ENCODE measurements at regions of chr9 and their contacts with region 1.

Region 1: DNA sequence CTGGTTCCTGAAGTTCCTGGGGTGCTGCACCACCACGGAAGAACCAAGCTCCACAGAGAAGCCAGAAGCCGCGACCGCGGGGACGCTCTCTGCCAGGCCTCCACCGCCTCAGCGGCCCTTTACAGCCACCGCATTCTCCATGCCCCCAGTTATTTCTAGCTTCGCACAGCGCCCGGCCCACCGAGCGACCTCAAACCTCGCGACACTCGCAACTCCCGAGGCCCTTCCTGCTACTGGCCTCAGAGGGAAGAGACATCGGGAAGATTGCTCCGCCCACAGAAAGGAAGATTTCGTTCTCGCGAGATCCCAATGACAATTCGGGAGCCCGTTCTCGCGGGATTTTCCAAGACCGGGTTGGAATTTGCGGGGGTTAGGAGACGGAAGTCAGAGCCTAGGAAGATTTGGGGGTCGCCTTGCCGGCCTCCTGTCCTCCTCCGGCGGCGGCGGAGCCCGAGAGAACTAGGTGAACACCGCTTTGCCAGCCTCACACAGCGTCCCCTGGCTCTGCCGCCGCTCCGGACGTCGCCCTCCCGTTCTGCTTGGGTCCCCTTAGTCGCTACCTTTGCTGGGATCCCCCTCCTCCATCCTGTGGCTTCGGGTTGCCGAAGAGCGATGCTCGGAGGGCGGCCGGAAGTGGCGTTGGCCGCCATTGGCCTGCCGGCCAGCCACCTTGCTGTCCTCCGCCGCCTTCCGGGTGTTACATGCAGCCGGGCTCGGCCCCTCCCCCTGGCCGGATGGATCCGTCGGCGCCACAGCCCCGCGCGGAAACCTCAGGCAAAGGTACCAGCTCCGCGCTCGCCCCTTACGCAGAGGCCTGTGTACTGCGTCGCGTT is at the start of gene ERCC6L2:
- DNase-seq: peak; percentile 94
- H3K4me3 Mint-ChIP-seq: no peak within 1 kb of the TSS
- H3K27ac Mint-ChIP-seq: no peak within 1 kb of the TSS
- H3K4me1 Mint-ChIP-seq: peaks cover 21% of the 10 kb centered on the region
- H3K27me3 Mint-ChIP-seq: no peaks in the 10 kb centered on the region
- total RNA-seq, gene ERCC6L2: 27.7 to 28.5 TPM

Region 2: DNA sequence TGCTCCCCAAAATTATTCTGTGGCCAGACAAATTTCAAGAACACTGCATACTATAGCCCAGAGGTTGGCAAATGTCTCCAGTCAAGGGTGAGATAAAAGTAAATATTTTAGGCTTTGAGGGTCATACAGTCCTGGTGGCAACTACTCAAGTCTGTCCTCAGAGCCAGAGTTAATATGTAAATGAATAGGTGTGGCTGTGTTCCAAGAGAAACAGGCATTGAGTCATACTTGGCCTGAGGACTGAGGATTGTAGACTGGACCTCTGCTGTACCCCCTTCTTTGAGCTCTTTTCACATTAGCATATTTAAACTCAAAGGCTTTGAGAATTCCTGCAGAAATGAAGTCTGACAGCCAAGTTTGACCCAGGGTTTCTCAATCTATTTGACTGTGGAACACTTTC is 229.5 kb before region 1 on chr9:
- CTCF ChIA-PET with region 1: no interaction called
- POLR2A ChIA-PET with region 1: no interaction called
- DNase-seq: no peak
- H3K4me3 Mint-ChIP-seq: no peak overlapping the region
- H3K27ac Mint-ChIP-seq: no peak overlapping the region
- H3K4me1 Mint-ChIP-seq: no peaks in the 10 kb centered on the region
- H3K27me3 Mint-ChIP-seq: peaks cover 2% of the 10 kb centered on the region

Region 3: GRCh38 chr9:95696701-95697100 is 178.8 kb before region 1 on chr9:
- CTCF ChIA-PET with region 1: no interaction called
- POLR2A ChIA-PET with region 1: no interaction called
- DNase-seq: no peak
- H3K4me3 Mint-ChIP-seq: no peak overlapping the region
- H3K27ac Mint-ChIP-seq: no peak overlapping the region
- H3K4me1 Mint-ChIP-seq: no peaks in the 10 kb centered on the region
- H3K27me3 Mint-ChIP-seq: peaks cover 1% of the 10 kb centered on the region

Region 4: GRCh38 chr9:95793924-95794828 is 81.3 kb before region 1 on chr9:
- CTCF ChIA-PET with region 1: no interaction called
- POLR2A ChIA-PET with region 1: no interaction called
- DNase-seq: no peak
- H3K4me3 Mint-ChIP-seq: no peak overlapping the region
- H3K27ac Mint-ChIP-seq: no peak overlapping the region
- H3K4me1 Mint-ChIP-seq: no peaks in the 10 kb centered on the region
- H3K27me3 Mint-ChIP-seq: peaks cover 30% of the 10 kb centered on the region

Region 5: GRCh38 chr9:95852059-95853032 is 23.2 kb before region 1 on chr9:
- CTCF ChIA-PET with region 1: interaction called, 5 read pairs
- POLR2A ChIA-PET with region 1: interaction called, 46 read pairs
- DNase-seq: no peak
- H3K4me3 Mint-ChIP-seq: peak overlapping the region; percentile 32
- H3K27ac Mint-ChIP-seq: peak overlapping the region; percentile 29
- H3K4me1 Mint-ChIP-seq: peaks cover 35% of the 10 kb centered on the region
- H3K27me3 Mint-ChIP-seq: no peaks in the 10 kb centered on the region

Region 6: DNA sequence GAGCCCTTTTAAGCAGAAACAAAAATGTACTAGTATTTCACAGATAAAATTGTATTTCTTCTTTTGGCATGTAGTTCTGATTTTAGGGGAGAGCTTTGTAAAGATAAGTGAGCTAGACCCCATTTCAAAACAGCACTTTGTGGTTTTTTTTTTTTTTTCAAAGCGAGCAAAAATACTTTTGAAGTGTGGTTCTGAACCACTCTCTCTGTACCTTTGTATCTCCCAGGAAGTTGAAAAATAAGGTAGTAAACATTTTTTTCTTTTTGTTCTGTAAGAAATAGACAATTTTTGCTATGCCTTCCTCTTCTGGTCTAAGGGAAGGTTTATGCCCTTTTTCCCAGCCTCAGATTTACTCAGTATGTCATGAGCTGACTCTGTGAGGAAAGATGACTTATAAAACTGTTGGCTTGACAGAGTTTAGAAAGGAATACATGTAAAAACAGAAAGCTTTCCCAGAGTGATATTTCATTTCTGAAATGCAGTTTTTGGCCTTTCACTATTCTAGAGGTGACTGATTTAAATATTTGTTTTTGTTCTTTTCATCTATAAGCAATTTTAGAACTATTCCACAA is 12.5 kb after region 1 on chr9:
- CTCF ChIA-PET with region 1: interaction called, 6 read pairs
- POLR2A ChIA-PET with region 1: interaction called, 30 read pairs
- DNase-seq: no peak
- H3K4me3 Mint-ChIP-seq: no peak overlapping the region
- H3K27ac Mint-ChIP-seq: peak overlapping the region; percentile 65
- H3K4me1 Mint-ChIP-seq: peaks cover 30% of the 10 kb centered on the region
- H3K27me3 Mint-ChIP-seq: no peaks in the 10 kb centered on the region

Region 7: GRCh38 chr9:95896580-95896979 is 21.1 kb after region 1 on chr9:
- CTCF ChIA-PET with region 1: no interaction called
- POLR2A ChIA-PET with region 1: interaction called, 14 read pairs
- DNase-seq: no peak
- H3K4me3 Mint-ChIP-seq: peak overlapping the region; percentile 5
- H3K27ac Mint-ChIP-seq: peak overlapping the region; percentile 50
- H3K4me1 Mint-ChIP-seq: peaks cover 22% of the 10 kb centered on the region
- H3K27me3 Mint-ChIP-seq: no peaks in the 10 kb centered on the region

Region 8: DNA sequence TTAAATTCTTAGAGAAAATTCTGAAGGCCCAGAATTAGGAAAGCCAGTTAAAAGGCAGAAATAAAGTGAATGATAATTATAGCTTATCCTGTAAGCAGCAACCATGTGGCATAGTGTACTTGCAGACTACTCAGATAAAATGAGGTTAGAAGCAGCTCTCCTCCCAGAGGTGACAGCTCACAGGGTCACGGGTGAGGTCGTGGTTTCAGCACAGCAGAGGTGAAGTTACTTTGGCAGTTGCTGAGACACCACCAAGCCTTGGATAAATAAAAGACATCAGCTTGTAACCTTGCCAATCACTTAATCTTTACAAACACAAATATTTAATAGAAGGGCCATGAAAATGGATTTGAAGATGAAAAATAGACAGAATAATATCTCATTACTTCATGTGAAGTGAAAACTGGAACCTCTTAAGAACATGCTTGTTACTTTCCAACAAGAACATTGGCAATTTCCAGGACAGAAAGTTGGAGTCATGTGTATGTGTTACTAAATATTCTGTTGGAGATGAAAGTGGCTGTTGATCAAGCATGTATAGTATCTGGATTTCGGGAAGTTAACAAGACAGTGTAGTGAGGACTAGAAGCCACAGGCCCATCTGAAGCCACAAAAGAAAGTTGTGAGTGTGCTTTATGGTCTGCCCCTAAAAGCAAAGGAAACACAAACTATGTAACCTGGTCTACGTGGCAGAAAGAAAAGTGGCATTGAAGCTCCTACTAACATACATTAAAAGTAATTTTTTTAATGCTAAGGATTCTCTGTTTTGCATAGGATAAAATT is 134.4 kb after region 1 on chr9:
- CTCF ChIA-PET with region 1: no interaction called
- POLR2A ChIA-PET with region 1: interaction called, 36 read pairs
- DNase-seq: peak; percentile 83
- H3K4me3 Mint-ChIP-seq: no peak overlapping the region
- H3K27ac Mint-ChIP-seq: peak overlapping the region; percentile 81
- H3K4me1 Mint-ChIP-seq: peaks cover 50% of the 10 kb centered on the region
- H3K27me3 Mint-ChIP-seq: no peaks in the 10 kb centered on the region

Region 9: DNA sequence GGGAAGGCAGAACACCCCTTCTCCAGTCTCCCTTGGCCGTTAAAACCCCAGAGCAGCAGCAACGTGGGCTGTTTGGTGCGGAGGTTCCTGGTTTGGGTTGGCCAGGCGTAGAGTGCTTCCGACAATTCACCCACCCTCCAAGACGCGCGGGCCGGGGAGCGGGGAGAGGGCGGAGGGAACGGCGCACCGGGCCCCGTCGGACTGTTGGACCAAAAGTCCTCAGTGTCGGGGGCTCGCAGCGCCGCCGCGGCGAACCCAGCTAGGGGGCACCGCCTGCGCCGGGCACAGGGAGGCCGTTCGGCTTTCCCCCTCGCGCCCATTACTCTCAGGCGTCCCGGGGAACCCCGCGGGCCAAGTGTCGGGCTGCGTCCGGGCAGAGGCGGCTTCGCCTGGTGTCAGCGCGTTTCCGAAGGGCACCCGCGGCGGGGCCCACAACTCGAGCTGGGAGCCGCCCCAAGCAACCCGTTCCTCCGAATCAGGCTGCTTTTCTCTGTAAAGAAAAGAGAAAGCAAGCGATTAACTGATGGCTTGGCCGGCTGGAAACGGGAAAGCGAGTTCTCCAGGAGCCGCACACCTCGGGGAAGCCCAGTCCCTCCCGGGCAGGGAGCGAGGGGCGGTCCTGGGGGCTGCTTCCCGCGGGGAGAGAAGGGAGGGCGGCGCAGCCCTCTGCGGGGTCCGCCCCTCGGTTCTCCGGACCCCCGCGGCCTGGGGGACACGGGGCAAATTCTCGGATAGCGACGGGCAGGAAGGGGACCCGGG is 145.4 kb after region 1 on chr9:
- CTCF ChIA-PET with region 1: interaction called, 4 read pairs
- POLR2A ChIA-PET with region 1: interaction called, 29 read pairs
- DNase-seq: peak; percentile 69
- H3K4me3 Mint-ChIP-seq: peak overlapping the region; percentile 75
- H3K27ac Mint-ChIP-seq: peak overlapping the region; percentile 75
- H3K4me1 Mint-ChIP-seq: peaks cover 74% of the 10 kb centered on the region
- H3K27me3 Mint-ChIP-seq: peaks cover 34% of the 10 kb centered on the region

Measured in activated CD4-positive, alpha-beta memory T cell treated with anti-CD3 and anti-CD28 coated beads, Interleukin-2, amount 10 ng/mL, durations not matched to agents 7 days and 5 days (primary cell).